BJ (cell line): ENCODE measurements at regions of chr1 and their contacts with region 1.

Region 1: GRCh38 chr1:207853372-207853757 is 57.6 kb downstream of the CD34 start:
- DNase-seq: no peak
- H3K4me3 ChIP-seq: no peak overlapping the region
- H3K27me3 ChIP-seq: no peaks in the 10 kb centered on the region
- CTCF ChIP-seq: no peak

Region 2: DNA sequence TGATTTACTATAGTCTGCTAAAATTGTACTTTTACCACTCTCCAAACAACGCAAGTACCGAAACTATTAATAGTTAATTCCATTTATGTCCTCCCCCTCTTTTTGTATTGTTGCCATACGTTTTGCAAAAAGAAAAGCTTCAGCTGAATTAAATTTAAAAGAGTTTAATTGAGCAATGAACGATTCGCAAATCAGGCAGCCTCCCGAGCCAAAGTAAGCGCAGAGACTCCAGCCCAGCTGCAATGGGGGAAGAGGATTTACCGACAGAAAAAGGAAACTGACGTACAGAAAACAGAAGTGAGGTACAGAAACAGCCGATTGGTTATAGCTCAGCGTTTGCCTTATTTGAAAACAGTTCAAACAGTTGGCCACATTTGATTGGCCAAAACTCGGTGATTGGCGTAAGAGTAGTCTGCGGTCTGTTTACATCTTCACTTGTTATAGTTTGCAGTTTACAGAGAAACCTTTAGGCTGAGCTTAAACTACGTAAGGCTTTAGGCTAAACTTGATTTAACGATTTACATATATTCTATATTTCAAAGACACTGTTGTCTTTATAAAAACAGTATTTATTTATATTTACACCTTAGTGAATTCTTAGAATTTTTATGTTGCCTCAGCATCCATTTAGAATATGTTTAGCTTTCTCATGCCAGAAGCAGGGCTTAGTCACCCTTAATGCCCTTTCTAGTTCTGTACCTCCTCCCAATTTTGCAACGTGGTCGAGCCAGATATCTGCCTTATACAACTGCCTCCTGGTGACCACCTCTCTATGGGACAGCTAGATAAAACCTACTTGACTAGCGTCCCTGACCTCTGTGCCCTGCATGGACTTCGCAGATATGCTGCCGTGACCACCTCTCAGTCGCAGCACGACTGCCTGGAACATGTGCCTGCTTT is 333.6 kb before region 1 on chr1:
- CTCF ChIA-PET with region 1: no interaction called
- POLR2A ChIA-PET with region 1: no interaction called
- DNase-seq: peak; percentile 13
- H3K4me3 ChIP-seq: peak overlapping the region; percentile 9; the same call in 1 of the 2 replicates
- H3K27me3 ChIP-seq: no peaks in the 10 kb centered on the region
- CTCF ChIP-seq: no peak

Region 3: GRCh38 chr1:207676153-207676552 is 177.2 kb before region 1 on chr1:
- CTCF ChIA-PET with region 1: no interaction called
- POLR2A ChIA-PET with region 1: no interaction called
- DNase-seq: no peak
- H3K4me3 ChIP-seq: no peak overlapping the region
- H3K27me3 ChIP-seq: no peaks in the 10 kb centered on the region; the same call in 1 of the 2 replicates
- CTCF ChIP-seq: no peak

Region 4: DNA sequence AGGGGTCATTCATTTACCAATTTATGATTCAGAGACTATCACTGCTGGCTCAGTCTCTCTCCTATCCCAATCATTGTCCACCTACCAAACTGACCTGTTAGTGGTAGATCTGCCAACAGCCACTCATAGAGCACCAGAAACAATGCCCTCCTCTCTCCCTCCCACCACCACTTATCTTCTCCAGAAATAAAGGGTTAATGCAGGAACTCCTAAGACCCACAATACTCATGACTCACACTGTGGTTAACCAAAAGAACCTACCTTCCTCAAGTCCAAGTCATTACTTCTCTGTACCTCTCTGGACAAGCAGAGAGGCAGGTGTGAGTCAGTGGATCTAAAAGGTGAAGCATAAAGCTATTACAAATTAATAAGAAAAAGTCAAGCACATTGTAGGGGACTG is 1689.2 kb after region 1 on chr1:
- CTCF ChIA-PET with region 1: no interaction called
- POLR2A ChIA-PET with region 1: interaction called, 15 read pairs
- DNase-seq: no peak
- H3K4me3 ChIP-seq: no peak overlapping the region
- H3K27me3 ChIP-seq: no peaks in the 10 kb centered on the region; the same call in none of the 2 replicates
- CTCF ChIP-seq: no peak